MCF 10A (cell line): ENCODE measurements at regions of chr1 and their contacts with region 1.

Region 1: DNA sequence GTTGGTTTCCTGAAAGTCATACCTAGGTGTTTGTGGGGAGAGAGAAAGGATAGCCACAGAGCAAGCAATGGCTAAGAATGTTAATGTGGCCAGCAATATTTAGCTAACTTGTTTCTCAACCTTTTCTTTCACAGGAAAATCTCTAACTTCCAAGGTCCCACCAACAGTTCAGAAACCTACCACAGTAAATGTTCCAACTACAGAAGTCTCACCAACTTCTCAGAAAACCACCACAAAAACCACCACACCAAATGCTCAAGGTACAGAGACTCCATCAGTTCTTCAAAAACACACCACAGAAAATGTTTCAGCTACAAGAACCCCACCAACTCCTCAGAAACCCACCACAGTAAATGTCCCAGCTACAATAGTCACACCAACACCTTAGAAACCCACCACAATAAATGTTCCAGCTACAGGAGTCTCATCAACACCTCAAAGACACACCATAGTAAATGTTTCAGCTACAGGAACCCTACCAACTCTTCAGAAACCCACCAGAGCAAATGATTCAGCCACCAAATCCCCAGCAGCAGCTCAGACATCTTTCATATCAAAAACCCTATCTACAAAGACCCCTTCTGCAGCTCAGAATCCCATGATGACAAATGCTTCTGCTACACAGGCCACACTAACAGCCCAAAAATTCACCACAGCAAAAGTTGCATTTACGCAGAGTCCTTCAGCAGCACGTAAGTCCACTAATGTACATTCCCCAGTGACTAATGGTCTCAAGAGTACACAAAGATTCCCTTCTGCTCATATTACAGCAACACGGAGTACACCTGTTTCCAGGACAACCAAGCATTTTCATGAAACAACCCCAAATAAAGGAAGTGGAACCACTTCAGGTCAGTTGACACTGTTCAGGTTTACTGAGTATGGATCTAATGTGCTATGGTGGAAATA is 15.3 kb downstream of the CD55 start:
- DNase-seq: peak; percentile 39
- H3K4me3 Mint-ChIP-seq: no peak overlapping the region
- H3K27ac Mint-ChIP-seq: peak overlapping the region; percentile 21
- H3K4me1 Mint-ChIP-seq: peaks cover 22% of the 10 kb centered on the region
- H3K27me3 Mint-ChIP-seq: no peaks in the 10 kb centered on the region
- CTCF ChIP-seq: no peak

Region 2: GRCh38 chr1:207181838-207182237 is 155.0 kb before region 1 on chr1:
- CTCF ChIA-PET with region 1: interaction called, 14 read pairs
- POLR2A ChIA-PET with region 1: interaction called, 3 read pairs
- intact Hi-C with region 1: no loop called
- DNase-seq: peak; percentile 66
- H3K4me3 Mint-ChIP-seq: no peak overlapping the region
- H3K27ac Mint-ChIP-seq: no peak overlapping the region
- H3K4me1 Mint-ChIP-seq: no peaks in the 10 kb centered on the region
- H3K27me3 Mint-ChIP-seq: no peaks in the 10 kb centered on the region
- CTCF ChIP-seq: peak; percentile 84

Region 3: GRCh38 chr1:207289756-207290155 is 47.1 kb before region 1 on chr1:
- CTCF ChIA-PET with region 1: no interaction called
- POLR2A ChIA-PET with region 1: no interaction called
- intact Hi-C with region 1: no loop called
- DNase-seq: no peak
- H3K4me3 Mint-ChIP-seq: no peak overlapping the region
- H3K27ac Mint-ChIP-seq: no peak overlapping the region
- H3K4me1 Mint-ChIP-seq: no peaks in the 10 kb centered on the region
- H3K27me3 Mint-ChIP-seq: no peaks in the 10 kb centered on the region
- CTCF ChIP-seq: no peak

Region 4: DNA sequence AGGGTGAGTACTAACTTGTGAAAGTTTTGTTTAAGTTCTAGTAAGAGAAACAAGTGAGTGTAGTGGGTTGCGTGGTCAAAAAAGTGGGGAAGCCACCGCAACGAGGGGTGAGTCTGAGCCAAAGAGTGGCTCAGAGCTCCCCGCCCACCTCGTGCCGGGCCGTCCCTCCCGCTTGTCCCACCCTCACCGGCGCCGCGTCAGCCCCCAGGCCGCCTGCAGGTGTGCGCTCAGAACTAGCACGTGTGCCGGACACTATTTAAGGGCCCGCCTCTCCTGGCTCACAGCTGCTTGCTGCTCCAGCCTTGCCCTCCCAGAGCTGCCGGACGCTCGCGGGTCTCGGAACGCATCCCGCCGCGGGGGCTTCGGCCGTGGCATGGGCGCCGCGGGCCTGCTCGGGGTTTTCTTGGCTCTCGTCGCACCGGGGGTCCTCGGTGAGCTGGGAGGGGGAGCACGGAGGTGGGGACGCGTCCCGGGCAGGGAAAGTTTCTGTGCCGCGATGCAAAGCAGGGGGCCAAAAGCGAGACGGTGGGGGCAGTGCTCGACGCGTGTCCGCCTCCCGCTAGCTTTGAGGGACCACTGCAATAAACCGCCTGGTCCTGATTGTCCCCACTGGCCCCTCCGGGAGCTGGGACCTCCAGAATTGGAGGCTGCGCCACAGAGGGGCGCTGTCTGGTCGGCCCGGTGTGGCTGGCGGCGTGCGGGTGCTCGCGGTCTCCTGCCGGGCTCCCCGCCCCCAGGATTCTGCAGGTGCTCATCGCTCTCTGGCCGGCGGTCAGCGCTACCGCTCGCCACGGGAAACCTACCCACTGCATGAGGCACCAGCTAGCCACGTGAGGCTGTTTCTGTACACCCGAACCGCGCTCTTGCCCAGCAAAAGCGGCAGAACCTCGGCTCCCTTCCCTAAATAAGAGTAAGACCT is 117.5 kb after region 1 on chr1 and contains the start of gene CR2:
- CTCF ChIA-PET with region 1: no interaction called
- POLR2A ChIA-PET with region 1: no interaction called
- intact Hi-C with region 1: no loop called
- DNase-seq: peak; percentile 72
- H3K4me3 Mint-ChIP-seq: peak within 1 kb of the TSS; percentile 39
- H3K27ac Mint-ChIP-seq: no peak within 1 kb of the TSS
- H3K4me1 Mint-ChIP-seq: no peaks in the 10 kb centered on the region
- H3K27me3 Mint-ChIP-seq: peaks cover 49% of the 10 kb centered on the region
- CTCF ChIP-seq: no peak
- total RNA-seq, gene CR2: not detected in 2 replicates

Region 5: DNA sequence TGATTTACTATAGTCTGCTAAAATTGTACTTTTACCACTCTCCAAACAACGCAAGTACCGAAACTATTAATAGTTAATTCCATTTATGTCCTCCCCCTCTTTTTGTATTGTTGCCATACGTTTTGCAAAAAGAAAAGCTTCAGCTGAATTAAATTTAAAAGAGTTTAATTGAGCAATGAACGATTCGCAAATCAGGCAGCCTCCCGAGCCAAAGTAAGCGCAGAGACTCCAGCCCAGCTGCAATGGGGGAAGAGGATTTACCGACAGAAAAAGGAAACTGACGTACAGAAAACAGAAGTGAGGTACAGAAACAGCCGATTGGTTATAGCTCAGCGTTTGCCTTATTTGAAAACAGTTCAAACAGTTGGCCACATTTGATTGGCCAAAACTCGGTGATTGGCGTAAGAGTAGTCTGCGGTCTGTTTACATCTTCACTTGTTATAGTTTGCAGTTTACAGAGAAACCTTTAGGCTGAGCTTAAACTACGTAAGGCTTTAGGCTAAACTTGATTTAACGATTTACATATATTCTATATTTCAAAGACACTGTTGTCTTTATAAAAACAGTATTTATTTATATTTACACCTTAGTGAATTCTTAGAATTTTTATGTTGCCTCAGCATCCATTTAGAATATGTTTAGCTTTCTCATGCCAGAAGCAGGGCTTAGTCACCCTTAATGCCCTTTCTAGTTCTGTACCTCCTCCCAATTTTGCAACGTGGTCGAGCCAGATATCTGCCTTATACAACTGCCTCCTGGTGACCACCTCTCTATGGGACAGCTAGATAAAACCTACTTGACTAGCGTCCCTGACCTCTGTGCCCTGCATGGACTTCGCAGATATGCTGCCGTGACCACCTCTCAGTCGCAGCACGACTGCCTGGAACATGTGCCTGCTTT is 182.9 kb after region 1 on chr1:
- CTCF ChIA-PET with region 1: no interaction called
- POLR2A ChIA-PET with region 1: no interaction called
- intact Hi-C with region 1: no loop called
- DNase-seq: no peak
- H3K4me3 Mint-ChIP-seq: no peak overlapping the region
- H3K27ac Mint-ChIP-seq: no peak overlapping the region
- H3K4me1 Mint-ChIP-seq: no peaks in the 10 kb centered on the region
- H3K27me3 Mint-ChIP-seq: peaks cover 45% of the 10 kb centered on the region
- CTCF ChIP-seq: no peak

Region 6: GRCh38 chr1:207828485-207829158 is 491.8 kb after region 1 on chr1:
- CTCF ChIA-PET with region 1: no interaction called
- POLR2A ChIA-PET with region 1: no interaction called
- intact Hi-C with region 1: no loop called
- DNase-seq: peak; percentile 96
- H3K4me3 Mint-ChIP-seq: no peak overlapping the region
- H3K27ac Mint-ChIP-seq: peak overlapping the region; percentile 96
- H3K4me1 Mint-ChIP-seq: peaks cover 78% of the 10 kb centered on the region
- H3K27me3 Mint-ChIP-seq: no peaks in the 10 kb centered on the region
- CTCF ChIP-seq: peak; percentile 99